Activated naive CD4-positive, alpha-beta T cell treated with anti-CD3 and anti-CD28 coated beads, Interleukin-2, amount 10 ng/mL, durations not matched to agents 7 days and 5 days (primary cell): ENCODE measurements at regions of chr17 and their contacts with region 1.

Region 1: DNA sequence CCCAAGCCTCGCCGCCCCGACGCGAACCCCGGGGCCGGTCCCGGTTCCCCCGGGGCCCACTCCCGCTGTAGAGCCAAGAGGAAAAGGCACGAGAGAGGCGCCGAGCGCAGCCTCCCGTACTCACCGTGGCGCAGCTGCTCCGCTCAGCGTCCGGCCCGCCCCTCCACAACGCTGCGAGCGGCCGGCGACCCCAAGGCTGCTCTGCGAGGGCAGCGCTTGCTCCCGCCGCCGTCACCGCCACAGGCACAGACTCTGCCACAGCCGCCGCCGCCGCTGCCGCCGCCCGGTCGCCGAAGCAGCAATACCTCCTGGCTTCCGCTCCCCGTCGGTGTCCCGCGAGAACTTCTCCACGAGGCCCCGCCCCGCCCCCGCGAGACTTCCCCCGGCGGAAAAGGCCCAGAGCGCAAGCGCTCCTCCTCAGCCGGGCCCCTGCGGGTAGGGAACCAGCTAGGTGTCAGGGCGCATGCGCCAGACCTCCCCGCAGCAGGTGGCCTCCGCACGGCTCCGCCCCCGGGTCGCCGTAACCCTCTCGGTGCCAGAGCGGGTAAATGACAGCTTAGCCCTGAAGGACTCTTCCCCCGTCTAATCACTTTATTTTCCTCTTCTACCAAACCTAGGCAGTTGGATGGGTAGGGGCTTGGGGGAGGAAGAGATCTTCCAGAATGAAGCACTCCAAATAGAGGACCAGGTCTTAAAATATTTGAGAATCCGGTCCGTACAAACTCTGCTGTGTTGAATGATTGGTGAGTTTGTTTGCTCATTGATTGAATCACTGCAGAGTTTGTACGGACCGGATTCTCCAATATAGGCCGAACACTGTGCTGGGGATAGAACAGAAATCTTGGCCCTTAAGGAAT is at the start of gene GRB2:
- DNase-seq: peak; percentile 100
- H3K4me3 Mint-ChIP-seq: peak within 1 kb of the TSS; percentile 92
- H3K27ac Mint-ChIP-seq: peak within 1 kb of the TSS; percentile 96
- H3K4me1 Mint-ChIP-seq: peaks cover 45% of the 10 kb centered on the region
- H3K27me3 Mint-ChIP-seq: no peaks in the 10 kb centered on the region

Region 2: DNA sequence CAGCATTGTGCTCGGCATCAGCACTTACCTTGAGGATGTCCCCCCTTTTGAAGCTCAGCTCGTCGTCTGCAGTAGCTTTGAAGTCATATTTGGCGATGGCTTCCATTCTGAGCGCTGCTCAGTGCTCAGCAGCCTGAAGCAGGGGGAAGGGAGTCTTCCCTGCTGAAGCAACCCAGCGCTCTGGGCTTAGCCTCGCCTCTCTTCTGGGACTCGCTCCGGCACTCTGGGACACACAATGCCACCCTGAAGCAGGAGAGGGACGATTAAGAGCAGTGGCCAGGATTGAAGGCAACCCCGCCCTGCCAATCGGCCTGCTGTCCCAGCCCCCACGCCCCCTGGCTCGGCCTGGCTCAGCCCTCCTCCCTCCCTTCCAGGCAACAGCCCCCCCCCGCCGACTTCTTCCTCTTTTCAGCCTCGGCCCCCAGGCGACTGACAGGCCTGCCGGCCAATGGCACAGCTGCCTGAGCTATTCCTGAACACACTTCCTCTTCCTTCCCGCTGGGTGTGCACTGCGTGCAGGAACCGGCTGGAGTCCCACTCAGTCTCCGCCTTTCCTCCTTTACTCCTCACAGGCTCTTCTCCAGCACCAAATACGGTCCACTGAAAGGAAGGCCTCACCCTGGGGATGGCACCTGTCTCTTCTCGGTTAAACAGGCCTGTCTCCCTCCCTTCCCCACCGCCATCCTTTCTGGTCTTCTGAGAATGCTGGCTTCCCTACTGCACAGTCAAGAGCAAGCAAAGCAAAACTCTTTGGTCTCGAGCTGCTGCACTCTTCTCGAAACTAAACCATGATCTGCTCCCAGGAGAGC is 11.9 kb before region 1 on chr17:
- CTCF ChIA-PET with region 1: interaction called, 10 read pairs
- DNase-seq: peak; percentile 92
- H3K4me3 Mint-ChIP-seq: peak overlapping the region; percentile 87
- H3K27ac Mint-ChIP-seq: peak overlapping the region; percentile 81
- H3K4me1 Mint-ChIP-seq: peaks cover 68% of the 10 kb centered on the region
- H3K27me3 Mint-ChIP-seq: no peaks in the 10 kb centered on the region